SK-MEL-5 (cell line): ENCODE measurements at regions of chr3 and their contacts with region 1.

Region 1: DNA sequence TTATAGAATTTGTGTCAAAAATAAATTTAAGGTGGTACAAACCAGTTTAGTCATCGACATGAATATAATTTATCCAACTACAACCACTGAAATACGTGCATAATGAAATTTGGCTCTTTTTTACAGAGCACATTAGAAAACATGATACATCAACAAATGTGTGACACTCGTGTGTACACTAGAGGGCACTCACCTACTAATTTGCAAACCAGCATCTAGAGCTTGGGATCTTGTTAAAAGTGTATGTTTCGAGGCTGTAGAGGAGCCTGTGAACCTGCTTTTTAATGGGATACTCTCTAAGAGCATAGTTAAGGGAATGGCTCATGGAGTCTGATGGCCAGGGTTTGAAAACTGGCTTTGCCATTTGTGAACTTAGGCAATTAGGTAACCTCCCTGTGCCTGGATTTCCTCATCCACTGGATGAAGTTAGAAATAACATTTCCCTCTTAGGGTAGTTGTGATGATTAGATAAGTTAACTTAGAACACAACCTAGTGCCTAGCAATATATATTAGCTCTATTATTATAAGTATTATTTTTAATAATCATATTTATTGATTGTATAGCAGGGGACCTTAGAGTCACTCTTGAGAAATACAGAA is 8.8 kb upstream of the CPOX start:
- DNase-seq: peak; percentile 86

Region 2: DNA sequence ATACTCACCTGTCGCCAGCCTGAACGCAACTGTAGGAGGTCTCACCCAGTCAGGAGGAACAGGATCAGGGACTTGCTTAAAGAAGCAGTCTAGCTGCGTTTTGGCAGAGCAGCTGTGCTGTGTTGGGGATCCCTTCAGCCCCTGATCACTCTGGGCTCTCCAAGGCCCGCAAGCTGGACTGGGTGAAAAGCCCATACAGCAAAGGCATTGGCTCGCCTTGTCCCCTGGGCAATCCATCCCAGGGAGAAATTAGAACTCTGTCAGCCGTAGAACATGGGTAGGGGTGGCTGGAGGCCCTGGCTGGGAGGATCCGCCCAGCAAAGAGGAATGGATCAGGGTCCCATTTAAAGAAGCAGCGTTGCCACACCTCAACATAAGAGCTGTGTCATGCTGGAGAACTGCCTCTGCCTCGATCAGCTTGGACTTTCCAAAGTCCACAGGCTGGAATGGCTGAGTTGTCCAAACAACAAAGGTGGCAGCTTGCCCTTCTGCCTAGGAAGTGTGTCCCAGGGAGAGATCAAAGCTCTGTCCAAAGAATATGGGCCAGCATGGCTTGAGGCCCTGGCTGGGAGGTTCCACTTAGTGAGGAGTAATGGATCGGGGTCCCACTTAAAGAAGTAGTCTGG is 310.7 kb before region 1 on chr3:
- in situ Hi-C with region 1: no loop called
- DNase-seq: no peak

Region 3: DNA sequence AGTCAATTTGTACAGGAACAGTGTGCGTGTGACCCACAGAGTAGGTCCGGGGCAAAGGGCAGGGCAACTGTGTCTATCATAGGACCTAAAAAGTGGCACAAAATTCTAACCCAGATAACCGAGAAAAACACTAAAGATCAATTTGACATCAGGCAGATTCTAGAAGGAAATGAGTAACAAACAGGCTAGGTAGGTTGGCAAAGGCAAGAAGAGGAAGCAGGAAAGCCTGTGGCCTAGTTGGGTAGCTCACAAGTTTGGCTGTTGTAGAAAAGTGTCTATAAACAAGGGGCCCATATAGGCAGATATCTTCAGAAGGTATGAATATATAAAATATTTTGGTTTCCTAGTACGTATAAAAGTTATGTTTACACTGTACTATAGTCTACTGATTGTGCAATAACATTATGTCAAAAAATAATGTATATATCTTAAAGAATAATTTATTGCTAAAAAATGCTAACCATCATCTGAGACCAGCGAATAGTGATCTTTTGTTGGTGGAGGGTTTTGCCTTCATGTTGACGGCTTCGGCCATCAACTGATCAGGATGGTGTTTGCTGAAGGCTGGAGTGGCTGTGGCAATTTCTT is 152.5 kb before region 1 on chr3:
- in situ Hi-C with region 1: no loop called
- DNase-seq: no peak

Region 4: DNA sequence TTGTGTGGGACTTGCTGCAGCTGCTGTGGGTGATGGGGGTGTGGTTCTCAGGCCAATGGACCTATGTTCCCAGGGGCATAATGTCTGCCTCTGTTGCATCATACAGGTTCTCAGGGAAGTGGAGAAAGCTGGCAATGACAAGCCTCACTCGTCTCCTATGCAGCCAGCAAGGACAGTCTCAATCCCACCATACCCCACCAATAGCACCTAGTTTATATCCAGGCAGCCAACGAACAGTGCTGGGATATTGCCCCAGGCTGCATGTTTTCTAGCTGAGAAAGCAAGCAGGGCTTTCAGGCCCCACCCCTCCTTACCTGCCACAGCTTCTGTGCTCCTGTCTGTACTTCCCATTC is 119.1 kb before region 1 on chr3:
- in situ Hi-C with region 1: no loop called
- DNase-seq: no peak

Region 5: GRCh38 chr3:98513091-98513511 is 89.1 kb before region 1 on chr3:
- in situ Hi-C with region 1: no loop called
- DNase-seq: no peak

Region 6: DNA sequence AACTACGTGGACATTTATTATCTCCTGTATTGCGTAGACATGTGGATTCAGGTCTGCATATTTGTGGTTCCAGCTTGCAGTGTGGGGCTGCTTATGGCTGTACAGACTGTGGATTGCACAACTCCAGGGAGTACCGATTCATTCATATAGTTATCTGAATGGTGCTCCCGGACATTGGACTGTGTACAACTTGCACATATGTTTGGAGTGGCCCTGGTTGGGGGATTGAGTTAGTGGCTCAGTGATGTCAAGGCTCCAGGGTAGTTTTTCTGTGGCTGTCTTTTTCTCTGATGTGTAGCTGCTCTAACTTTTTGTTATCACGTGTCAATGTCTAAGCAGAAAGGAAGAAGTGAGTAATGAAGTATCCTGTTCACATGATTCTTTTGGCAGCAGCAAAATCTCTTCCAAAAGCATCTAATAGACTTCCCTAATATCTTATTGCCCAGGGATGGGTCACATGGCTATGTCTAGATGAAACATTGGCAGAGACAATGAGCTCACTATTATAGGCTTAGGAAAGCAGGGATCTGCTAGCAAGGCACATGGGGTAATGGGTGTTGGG is 176.8 kb after region 1 on chr3:
- in situ Hi-C with region 1: loop called (anchors 25 kb)
- DNase-seq: peak; percentile 99